H1 (cell line): ENCODE measurements at regions of chr14 and their contacts with region 1.

Region 1: GRCh38 chr14:99982537-99983250 is 82.5 kb upstream of the EVL start:
- DNase-seq: peak in 1 of 2 experiments; percentile 46
- H3K4me3 ChIP-seq: no peak overlapping the region
- H3K27ac ChIP-seq: no peak overlapping the region
- H3K4me1 ChIP-seq: no peaks in the 10 kb centered on the region
- H3K27me3 ChIP-seq: no peaks in the 10 kb centered on the region
- CTCF ChIP-seq: peak; percentile 50 to 89 (median 86)
- EP300 ChIP-seq: no peak
- POLR2A ChIP-seq: no peak
- RAD21 ChIP-seq: peak; percentile 88 to 90

Region 2: DNA sequence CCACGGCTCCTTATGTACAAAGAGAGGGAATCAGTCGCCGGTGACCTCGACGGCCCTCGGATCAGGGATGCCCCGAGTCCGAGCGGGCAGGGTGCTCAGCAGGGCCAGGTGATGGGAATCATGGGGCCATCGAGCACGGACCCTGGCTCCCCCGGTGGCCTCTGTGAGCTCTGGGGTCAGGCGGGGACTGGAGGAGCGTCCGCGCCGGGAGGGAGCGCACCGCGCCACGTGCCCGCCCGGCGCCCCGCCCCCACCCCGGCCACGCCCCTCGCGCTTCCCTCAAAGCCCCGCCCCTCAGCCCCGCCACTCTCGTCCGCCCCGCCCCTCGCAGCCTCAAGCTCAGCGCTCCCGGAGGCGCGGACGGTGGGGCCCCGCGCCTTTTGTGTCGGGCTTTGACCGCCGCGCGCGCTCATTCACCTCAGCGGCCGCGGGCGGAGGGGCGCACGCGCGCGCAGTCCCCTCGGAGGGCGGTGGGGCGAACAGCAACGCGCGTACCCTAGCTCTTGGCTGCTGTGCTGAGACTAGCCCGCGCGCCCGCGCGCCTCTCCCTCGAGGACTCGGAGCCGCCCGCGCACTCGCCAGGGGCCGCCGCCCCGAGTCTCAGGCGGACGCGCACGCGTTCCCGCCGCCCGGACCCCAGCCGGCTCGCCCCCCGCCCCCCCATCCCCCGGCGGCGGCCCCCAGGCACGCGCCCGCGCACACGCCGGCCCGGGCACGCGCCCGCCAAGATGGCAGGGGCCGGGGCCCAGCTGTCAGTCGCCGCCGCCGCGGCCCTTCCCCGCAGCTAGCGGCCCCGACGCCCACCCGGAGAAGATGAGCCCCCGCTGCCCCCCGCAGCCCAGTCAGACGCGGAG is 11.4 kb before region 1 on chr14:
- CTCF ChIA-PET with region 1: interaction called, 18 read pairs
- POLR2A ChIA-PET with region 1: interaction called, 4 read pairs
- DNase-seq: peak; percentile 49 to 91
- H3K4me3 ChIP-seq: peak overlapping the region; percentile 50 to 89 (median 65)
- H3K27ac ChIP-seq: peak overlapping the region; percentile 77; the same call in 1 of the 2 replicates
- H3K4me1 ChIP-seq: peaks cover 0 to 12% (median 5%) of the 10 kb centered on the region in 4 experiments; a peak in 6 of 7 replicates
- H3K27me3 ChIP-seq: peaks cover 6 to 22% (median 19%) of the 10 kb centered on the region in 4 experiments
- CTCF ChIP-seq: 0 out of 4 replicates have a peak, but pooled peaks of 1 of the 3 experiments have one; percentile 1
- EP300 ChIP-seq: no peak
- POLR2A ChIP-seq: peak; percentile 50 to 80
- RAD21 ChIP-seq: no peak

Region 3: GRCh38 chr14:99995700-99996356 is 13.1 kb after region 1 on chr14:
- CTCF ChIA-PET with region 1: interaction called, 27 read pairs
- POLR2A ChIA-PET with region 1: no interaction called
- DNase-seq: peak; percentile 29 to 80
- H3K4me3 ChIP-seq: no peak overlapping the region
- H3K27ac ChIP-seq: no peak overlapping the region
- H3K4me1 ChIP-seq: no peaks in the 10 kb centered on the region; a peak in 1 of 7 replicates
- H3K27me3 ChIP-seq: no peaks in the 10 kb centered on the region
- CTCF ChIP-seq: peak; percentile 77 to 93 (median 87)
- EP300 ChIP-seq: no peak
- POLR2A ChIP-seq: no peak
- RAD21 ChIP-seq: peak; percentile 72 to 77

Region 4: DNA sequence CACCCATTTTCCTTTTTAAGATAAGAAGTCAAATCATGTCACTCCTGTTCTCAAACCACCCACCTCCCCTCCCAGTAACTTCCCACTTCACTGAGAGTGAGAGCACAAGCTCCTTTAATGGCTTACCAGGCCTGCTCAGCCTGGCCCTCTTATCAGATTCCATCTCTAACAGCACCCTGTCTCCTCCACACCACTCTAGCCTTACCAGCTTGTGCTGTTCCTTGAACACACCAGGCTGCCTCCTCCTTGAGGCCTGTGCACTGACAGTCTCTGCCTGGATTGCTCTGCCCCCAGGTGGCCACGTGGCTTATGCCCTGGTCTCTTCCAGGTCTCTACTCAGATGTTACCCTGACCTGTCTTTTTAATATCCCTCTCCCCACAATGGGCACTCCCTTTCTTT is 42.4 kb after region 1 on chr14:
- CTCF ChIA-PET with region 1: interaction called, 44 read pairs
- POLR2A ChIA-PET with region 1: no interaction called
- DNase-seq: peak in 1 of 2 experiments; percentile 29
- H3K4me3 ChIP-seq: no peak overlapping the region
- H3K27ac ChIP-seq: no peak overlapping the region
- H3K4me1 ChIP-seq: no peaks in the 10 kb centered on the region
- H3K27me3 ChIP-seq: peaks cover 0 to 2% (median 0%) of the 10 kb centered on the region in 4 experiments; a peak in 2 of 7 replicates
- CTCF ChIP-seq: peak; percentile 68 to 80 (median 73)
- EP300 ChIP-seq: no peak
- POLR2A ChIP-seq: no peak
- RAD21 ChIP-seq: peak; percentile 70 to 79

Region 5: DNA sequence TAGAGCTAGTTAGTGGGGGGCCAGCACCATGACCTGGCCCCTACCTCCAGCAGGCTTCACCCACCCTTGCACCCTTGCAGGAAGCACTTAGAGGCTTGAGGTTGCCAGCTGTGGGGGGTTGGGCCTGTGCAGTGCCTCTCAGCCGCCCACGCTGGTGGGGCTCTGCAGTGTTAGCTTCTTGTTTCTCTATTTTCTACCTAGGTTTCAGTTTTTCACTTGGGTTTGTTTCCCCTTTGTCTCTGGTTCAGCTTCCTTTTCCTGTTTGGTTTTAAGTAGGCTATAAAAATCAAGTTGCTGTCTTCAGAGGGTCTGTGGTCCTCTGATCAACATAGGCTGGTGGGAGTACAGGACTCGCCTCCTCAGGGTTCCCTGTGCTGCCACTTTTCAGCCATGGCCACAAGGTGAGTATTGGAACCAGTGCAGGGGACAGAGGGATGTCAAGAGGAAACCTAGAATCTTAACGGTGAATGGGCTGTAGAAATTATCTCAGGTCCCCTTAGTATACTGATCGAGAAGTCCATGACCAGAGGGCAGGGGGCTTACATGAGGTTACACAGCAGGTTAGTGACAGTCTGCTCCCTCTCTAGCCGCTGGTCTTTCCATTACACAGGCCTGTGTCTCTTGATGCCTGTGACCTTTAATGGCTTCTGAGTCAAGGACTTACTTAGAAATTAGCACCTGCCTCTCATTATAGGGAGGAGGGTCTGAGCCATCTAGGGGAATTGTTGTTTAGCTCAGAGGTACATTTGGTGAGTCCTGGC is 82.6 kb after region 1 on chr14 and contains the start of gene EVL:
- CTCF ChIA-PET with region 1: interaction called, 17 read pairs
- POLR2A ChIA-PET with region 1: no interaction called
- DNase-seq: no peak
- H3K4me3 ChIP-seq: no peak within 1 kb of the TSS
- H3K27ac ChIP-seq: no peak within 1 kb of the TSS
- H3K4me1 ChIP-seq: no peaks in the 10 kb centered on the region
- H3K27me3 ChIP-seq: no peaks in the 10 kb centered on the region
- CTCF ChIP-seq: no peak
- EP300 ChIP-seq: no peak
- POLR2A ChIP-seq: no peak
- RAD21 ChIP-seq: no peak
- total RNA-seq, gene EVL: 64.0 and 64.6 TPM in 2 replicates

Region 6: GRCh38 chr14:100122481-100123222 is 140.0 kb after region 1 on chr14:
- CTCF ChIA-PET with region 1: interaction called, 12 read pairs
- POLR2A ChIA-PET with region 1: no interaction called
- DNase-seq: no peak
- H3K4me3 ChIP-seq: no peak overlapping the region
- H3K27ac ChIP-seq: no peak overlapping the region
- H3K4me1 ChIP-seq: no peaks in the 10 kb centered on the region
- H3K27me3 ChIP-seq: no peaks in the 10 kb centered on the region
- CTCF ChIP-seq: no peak
- EP300 ChIP-seq: no peak
- POLR2A ChIP-seq: no peak
- RAD21 ChIP-seq: peak in 1 of 2 experiments; percentile 23; a peak in 1 of 4 replicates

Region 7: DNA sequence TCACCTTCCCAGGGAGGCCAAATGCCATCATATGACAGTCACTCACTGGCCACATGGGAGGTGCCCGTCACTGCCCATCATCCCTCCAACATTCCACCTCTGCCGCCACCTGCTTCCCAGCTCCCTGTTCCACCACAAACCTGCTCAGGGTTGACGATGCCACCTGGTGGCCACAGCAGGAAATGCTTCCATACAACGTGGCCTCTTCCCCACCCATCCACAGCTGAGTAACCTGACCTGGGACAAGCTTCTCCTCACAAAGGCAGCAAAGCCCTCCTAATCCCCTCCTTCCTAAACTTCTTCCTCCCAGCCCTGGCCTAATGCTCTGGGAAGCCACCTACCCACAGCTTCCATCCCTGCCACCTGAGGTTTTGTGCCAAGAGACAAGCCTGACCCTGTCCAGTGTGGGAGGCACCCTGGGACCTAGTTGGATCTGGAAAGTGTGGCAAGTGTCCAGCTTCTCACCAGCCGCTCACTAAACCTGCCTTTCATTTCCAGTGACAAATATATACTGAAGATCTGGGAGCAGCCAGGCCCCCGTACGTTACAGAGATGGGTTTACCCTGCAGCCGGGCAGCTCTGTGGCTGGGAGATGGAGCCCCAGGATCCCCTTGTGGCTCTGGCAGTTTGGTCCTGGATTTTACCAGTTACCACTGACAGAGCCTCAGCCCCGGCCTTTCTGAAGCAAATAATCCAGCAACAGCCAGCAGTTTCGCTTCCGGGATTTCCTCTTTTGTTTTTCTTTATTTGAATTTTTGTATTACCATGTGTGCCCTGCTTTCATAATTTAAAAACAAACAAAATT is 172.6 kb after region 1 on chr14:
- CTCF ChIA-PET with region 1: interaction called, 15 read pairs
- POLR2A ChIA-PET with region 1: no interaction called
- DNase-seq: peak; percentile 73 to 93
- H3K4me3 ChIP-seq: no peak overlapping the region
- H3K27ac ChIP-seq: no peak overlapping the region
- H3K4me1 ChIP-seq: peaks cover 0 to 11% (median 2%) of the 10 kb centered on the region in 4 experiments; a peak in 5 of 7 replicates
- H3K27me3 ChIP-seq: peaks cover 12 to 31% (median 26%) of the 10 kb centered on the region in 4 experiments
- CTCF ChIP-seq: peak in 2 of 3 experiments; percentile 95 to 99; a peak in 3 of 4 replicates
- EP300 ChIP-seq: 0 out of 3 replicates have a peak, but pooled peaks of 1 of the 2 experiments have one; percentile 22
- POLR2A ChIP-seq: no peak
- RAD21 ChIP-seq: peak; percentile 78 to 82

Region 8: DNA sequence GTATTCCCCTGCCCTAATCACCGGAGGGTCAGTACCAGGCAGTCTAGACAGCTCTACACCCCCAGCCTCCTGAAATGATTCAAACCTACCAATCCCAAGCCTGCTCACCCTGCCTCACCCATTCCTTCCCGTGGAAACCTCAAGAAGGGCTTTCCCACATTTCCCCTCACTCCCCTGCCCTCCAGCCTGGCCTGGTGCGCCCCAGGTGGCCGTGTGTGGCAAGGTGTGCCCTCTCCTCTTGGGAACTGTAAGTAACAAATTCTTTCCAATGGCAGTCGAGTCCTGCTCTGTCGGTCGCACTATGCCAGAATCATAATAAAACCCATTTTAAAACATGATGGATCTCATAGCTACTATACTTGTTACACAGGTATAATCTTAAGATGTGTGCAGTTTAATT is 190.7 kb after region 1 on chr14:
- CTCF ChIA-PET with region 1: no interaction called
- POLR2A ChIA-PET with region 1: no interaction called
- DNase-seq: no peak
- H3K4me3 ChIP-seq: no peak overlapping the region
- H3K27ac ChIP-seq: no peak overlapping the region
- H3K4me1 ChIP-seq: no peaks in the 10 kb centered on the region; a peak in 1 of 7 replicates
- H3K27me3 ChIP-seq: no peaks in the 10 kb centered on the region
- CTCF ChIP-seq: peak; percentile 23 to 48 (median 36); a peak in 3 of 4 replicates
- EP300 ChIP-seq: no peak
- POLR2A ChIP-seq: no peak
- RAD21 ChIP-seq: peak in 1 of 2 experiments; percentile 37; a peak in 2 of 4 replicates